Caco-2 (cell line): ENCODE measurements at regions of chr2 and their contacts with region 1.

Region 1: GRCh38 chr2:118321432-118322131 is 233.3 kb downstream of the INSIG2 start:
- DNase-seq: peak; percentile 65 to 73
- H3K4me3 ChIP-seq: no peak overlapping the region
- H3K4me3 Mint-ChIP-seq: no peak overlapping the region
- H3K27ac Mint-ChIP-seq: no peak overlapping the region
- H3K4me1 ChIP-seq: peaks cover 12% of the 10 kb centered on the region; the same call in 1 of the 2 replicates
- H3K4me1 Mint-ChIP-seq: peaks cover 26% of the 10 kb centered on the region
- H3K27me3 ChIP-seq: no peaks in the 10 kb centered on the region
- H3K27me3 Mint-ChIP-seq: no peaks in the 10 kb centered on the region
- CTCF ChIP-seq: peak in 1 of 2 experiments; percentile 51

Region 2: DNA sequence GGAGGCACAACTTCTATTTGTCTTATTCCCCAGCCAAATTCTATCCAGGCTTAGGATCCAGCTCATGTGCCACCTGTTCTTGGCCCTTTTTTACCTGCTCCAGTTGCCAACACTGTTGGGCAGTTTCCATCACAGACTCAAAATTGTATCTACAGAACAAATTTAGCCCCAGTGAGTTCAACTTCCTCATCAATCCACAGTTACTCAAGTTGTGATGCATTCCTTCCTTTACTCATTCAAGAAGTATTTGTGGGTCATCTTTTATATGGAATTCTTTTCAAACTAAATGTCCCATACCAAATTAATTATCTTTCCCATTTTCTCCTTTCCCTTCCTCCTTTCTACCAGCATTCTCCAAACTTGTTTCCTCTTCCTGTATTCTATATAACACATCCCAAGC is 519.8 kb before region 1 on chr2:
- CTCF ChIA-PET with region 1: no interaction called
- POLR2A ChIA-PET with region 1: no interaction called
- intact Hi-C with region 1: no loop called
- DNase-seq: no peak
- H3K4me3 ChIP-seq: no peak overlapping the region
- H3K4me3 Mint-ChIP-seq: no peak overlapping the region
- H3K27ac Mint-ChIP-seq: no peak overlapping the region
- H3K4me1 ChIP-seq: no peaks in the 10 kb centered on the region
- H3K4me1 Mint-ChIP-seq: no peaks in the 10 kb centered on the region
- H3K27me3 ChIP-seq: no peaks in the 10 kb centered on the region
- H3K27me3 Mint-ChIP-seq: peaks cover 19% of the 10 kb centered on the region
- CTCF ChIP-seq: no peak

Region 3: DNA sequence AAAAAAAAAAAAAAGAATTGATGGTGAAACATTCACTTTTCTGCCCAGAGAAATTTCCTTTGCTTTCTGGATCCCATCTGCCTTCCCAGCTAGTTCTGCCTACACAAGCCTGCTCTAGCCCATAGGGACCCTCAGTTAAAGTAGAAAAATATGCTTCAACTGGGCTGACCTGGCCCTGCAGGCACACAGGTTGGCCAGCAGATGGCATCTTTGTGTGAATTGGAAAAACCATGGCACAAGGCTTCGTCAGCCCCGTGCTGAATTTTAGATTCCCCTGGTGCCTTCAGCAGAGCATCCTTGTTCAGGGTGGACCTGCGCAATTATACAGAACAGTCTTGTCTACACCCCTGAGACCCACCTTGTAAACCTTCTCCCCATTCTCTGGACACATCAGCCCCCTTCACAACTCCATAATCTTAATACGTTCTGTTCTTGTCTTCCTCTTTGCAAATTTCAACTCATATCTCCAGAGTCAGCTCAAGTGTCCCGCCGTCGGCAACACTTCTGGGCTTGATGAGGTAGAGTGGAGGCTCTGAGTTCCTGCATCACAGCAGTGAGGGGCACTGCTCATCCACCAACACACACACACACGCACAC is 118.8 kb before region 1 on chr2:
- CTCF ChIA-PET with region 1: no interaction called
- POLR2A ChIA-PET with region 1: no interaction called
- intact Hi-C with region 1: loop called (anchors 5 kb)
- DNase-seq: peak; percentile 51 to 58
- H3K4me3 ChIP-seq: no peak overlapping the region
- H3K4me3 Mint-ChIP-seq: no peak overlapping the region
- H3K27ac Mint-ChIP-seq: no peak overlapping the region
- H3K4me1 ChIP-seq: no peaks in the 10 kb centered on the region
- H3K4me1 Mint-ChIP-seq: no peaks in the 10 kb centered on the region
- H3K27me3 ChIP-seq: no peaks in the 10 kb centered on the region
- H3K27me3 Mint-ChIP-seq: peaks cover 13% of the 10 kb centered on the region
- CTCF ChIP-seq: peak; percentile 73 to 90

Region 4: DNA sequence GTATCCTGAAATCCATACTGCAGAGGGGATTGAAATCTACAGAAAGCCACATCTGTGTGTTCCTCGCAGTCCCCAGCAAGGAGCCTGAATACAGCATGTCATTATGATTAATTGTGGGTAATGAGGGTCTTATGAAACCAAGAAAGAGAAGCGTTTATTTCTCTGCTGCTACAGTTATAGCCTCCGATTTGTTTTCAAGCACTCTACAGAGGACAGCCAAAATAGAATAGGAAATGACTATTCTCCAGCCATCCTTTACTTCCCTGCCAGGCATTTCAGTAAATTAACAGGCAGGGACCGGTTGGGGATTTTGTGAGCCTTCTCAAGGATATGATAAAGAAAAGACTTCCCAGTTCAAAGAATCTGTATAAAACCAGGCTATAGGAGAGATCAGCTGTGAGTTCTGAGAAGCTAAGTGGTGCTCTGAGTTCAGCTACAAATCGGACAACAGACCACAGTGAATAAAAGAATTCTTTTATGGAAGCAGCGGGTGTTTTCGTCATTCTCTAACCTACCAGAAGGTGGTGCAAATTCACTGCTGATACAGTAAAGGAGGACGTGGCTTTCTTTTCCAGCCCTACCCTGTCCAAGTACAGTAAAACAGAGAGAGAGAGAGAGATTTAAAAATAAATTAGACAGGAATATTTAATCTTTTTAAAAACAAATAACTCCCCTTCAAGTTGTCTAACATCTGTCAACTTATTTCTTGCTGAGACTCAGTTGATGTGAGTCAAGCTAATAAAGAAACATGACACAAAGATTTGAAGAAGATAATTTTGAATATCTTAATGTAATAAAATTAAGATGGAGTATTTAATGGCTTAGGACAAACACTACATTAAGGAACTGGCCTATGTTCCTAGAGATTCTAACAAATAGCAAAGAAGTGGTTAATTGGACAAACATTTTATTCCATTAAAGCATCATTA is 99.7 kb before region 1 on chr2:
- CTCF ChIA-PET with region 1: no interaction called
- POLR2A ChIA-PET with region 1: no interaction called
- intact Hi-C with region 1: loop called (anchors 1 kb)
- DNase-seq: peak in 1 of 2 experiments; percentile 63
- H3K4me3 ChIP-seq: no peak overlapping the region
- H3K4me3 Mint-ChIP-seq: no peak overlapping the region
- H3K27ac Mint-ChIP-seq: no peak overlapping the region
- H3K4me1 ChIP-seq: no peaks in the 10 kb centered on the region
- H3K4me1 Mint-ChIP-seq: no peaks in the 10 kb centered on the region
- H3K27me3 ChIP-seq: peaks cover 4% of the 10 kb centered on the region
- H3K27me3 Mint-ChIP-seq: peaks cover 23% of the 10 kb centered on the region
- CTCF ChIP-seq: peak; percentile 67 to 72

Region 5: DNA sequence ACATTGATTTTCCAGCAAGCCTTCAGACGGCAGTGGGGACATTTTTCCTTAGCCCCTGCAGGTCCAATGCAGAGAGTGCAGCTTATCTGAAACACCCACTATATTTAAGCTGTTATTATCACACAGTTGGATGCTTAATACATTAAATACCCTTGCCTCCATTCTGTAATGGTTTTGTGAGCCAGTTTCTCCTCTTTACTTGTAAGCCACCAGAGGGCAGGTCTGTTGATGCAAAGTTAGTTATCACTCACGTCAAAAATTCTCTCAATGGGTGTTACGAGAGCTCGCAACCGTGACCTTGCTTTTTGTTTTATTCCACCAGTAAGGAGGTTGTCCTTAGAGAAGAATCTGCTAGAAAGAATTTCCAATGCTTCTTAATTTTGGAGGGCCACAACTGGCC is 43.5 kb before region 1 on chr2:
- CTCF ChIA-PET with region 1: interaction called, 3 read pairs
- POLR2A ChIA-PET with region 1: no interaction called
- intact Hi-C with region 1: loop called (anchors 1 kb)
- DNase-seq: no peak
- H3K4me3 ChIP-seq: no peak overlapping the region
- H3K4me3 Mint-ChIP-seq: no peak overlapping the region
- H3K27ac Mint-ChIP-seq: no peak overlapping the region
- H3K4me1 ChIP-seq: no peaks in the 10 kb centered on the region
- H3K4me1 Mint-ChIP-seq: peaks cover 6% of the 10 kb centered on the region
- H3K27me3 ChIP-seq: no peaks in the 10 kb centered on the region; the same call in 1 of the 2 replicates
- H3K27me3 Mint-ChIP-seq: peaks cover 12% of the 10 kb centered on the region
- CTCF ChIP-seq: no peak